GM12878 (cell line): ENCODE measurements at regions of chr1 and their contacts with region 1.

Region 1: GRCh38 chr1:169115891-169116585 is 9.5 kb downstream of the ATP1B1 start:
- DNase-seq: peak; percentile 66
- ATAC-seq: peak; percentile 89
- H3K4me3 ChIP-seq: no peak overlapping the region
- H3K27ac ChIP-seq: 0 out of 2 replicates have a peak overlapping the region, but pooled peaks have one; percentile 20
- H3K4me1 ChIP-seq: peaks cover 8% of the 10 kb centered on the region
- H3K27me3 ChIP-seq: no peaks in the 10 kb centered on the region
- CTCF ChIP-seq: no peak
- EP300 ChIP-seq: 0 out of 4 replicates have a peak, but pooled peaks of 1 of the 2 experiments have one; percentile 10
- POLR2A ChIP-seq: no peak
- RAD21 ChIP-seq: no peak

Region 2: GRCh38 chr1:169133801-169134502 is 17.9 kb after region 1 on chr1:
- CTCF ChIA-PET with region 1: interaction called, 18 read pairs
- POLR2A ChIA-PET with region 1: interaction called, 3 read pairs
- RAD21 ChIA-PET with region 1: interaction called, 15 read pairs
- SMC1A ChIA-PET with region 1: interaction called, 32 read pairs
- in situ Hi-C with region 1: no loop called
- intact Hi-C with region 1: no loop called
- DNase-seq: no peak
- ATAC-seq: peak; percentile 49; the same call in 1 of the 3 replicates
- H3K4me3 ChIP-seq: no peak overlapping the region
- H3K27ac ChIP-seq: no peak overlapping the region
- H3K4me1 ChIP-seq: no peaks in the 10 kb centered on the region
- H3K27me3 ChIP-seq: no peaks in the 10 kb centered on the region
- CTCF ChIP-seq: peak in 2 of 3 experiments; percentile 30 to 58; a peak in 3 of 6 replicates
- EP300 ChIP-seq: no peak
- POLR2A ChIP-seq: no peak
- RAD21 ChIP-seq: peak; percentile 65